Dorsolateral prefrontal cortex (tissue), 120 donors: ENCODE measurements at regions of chr7 and their contacts with region 1.

Region 1: DNA sequence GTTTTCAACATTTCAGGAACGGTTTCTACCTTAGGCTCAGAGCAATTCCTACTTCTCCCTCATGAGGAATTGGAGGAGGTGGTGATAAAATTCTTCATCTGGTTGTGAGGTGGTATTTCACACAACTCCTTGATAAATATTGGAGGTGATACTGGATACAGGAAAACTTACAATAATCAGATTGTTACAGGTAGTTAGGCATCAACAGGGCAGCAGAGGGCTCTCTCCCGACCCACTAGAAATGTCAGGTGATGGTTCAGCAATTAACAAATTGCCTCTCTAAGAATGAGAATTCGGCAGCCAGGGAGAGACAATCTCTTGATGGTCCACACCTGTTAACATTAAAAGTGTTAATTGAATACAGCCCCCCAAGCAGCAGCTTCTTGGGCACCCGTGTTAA is 22.6 kb downstream of the ZNF786 start:
- DNase-seq: no peak
- H3K4me3 ChIP-seq: no peak overlapping the region
- H3K27ac ChIP-seq: no peak overlapping the region
- H3K27me3 ChIP-seq: no peaks in the 10 kb centered on the region
- CTCF ChIP-seq: peak in 1 of 56 donors; percentile 6

Region 2: GRCh38 chr7:148575640-148576411 is 492.1 kb before region 1 on chr7:
- intact Hi-C with region 1: loop called in 1 of 2 experiments (anchors 10 kb)
- DNase-seq: peak; percentile 34 to 78 (median 70)
- H3K4me3 ChIP-seq: no peak overlapping the region
- H3K27ac ChIP-seq: no peak overlapping the region
- H3K27me3 ChIP-seq: no peaks in the 10 kb centered on the region
- CTCF ChIP-seq: peak; percentile 53 to 92 (median 81)

Region 3: GRCh38 chr7:148987010-148987750 is 80.7 kb before region 1 on chr7:
- intact Hi-C with region 1: loop called in 1 of 2 experiments (anchors 5 kb)
- DNase-seq: peak; percentile 50 to 92 (median 82)
- H3K4me3 ChIP-seq: peak overlapping the region; percentile 41 to 95 (median 76)
- H3K27ac ChIP-seq: peak overlapping the region; percentile 26 to 95 (median 87)
- H3K27me3 ChIP-seq: no peaks in the 10 kb centered on the region
- CTCF ChIP-seq: peak in 6 of 56 donors; percentile 5 to 17 (median 9)

Region 4: GRCh38 chr7:149005241-149006050 is 62.4 kb before region 1 on chr7:
- intact Hi-C with region 1: loop called (anchors 1 to 10 kb)
- DNase-seq: peak; percentile 55 to 82 (median 76)
- H3K4me3 ChIP-seq: peak overlapping the region in 2 of 59 donors; percentile 4 to 32
- H3K27ac ChIP-seq: peak overlapping the region in 4 of 59 donors; percentile 6 to 60 (median 25)
- H3K27me3 ChIP-seq: no peaks in the 10 kb centered on the region
- CTCF ChIP-seq: peak; percentile 45 to 93 (median 82)

Region 5: DNA sequence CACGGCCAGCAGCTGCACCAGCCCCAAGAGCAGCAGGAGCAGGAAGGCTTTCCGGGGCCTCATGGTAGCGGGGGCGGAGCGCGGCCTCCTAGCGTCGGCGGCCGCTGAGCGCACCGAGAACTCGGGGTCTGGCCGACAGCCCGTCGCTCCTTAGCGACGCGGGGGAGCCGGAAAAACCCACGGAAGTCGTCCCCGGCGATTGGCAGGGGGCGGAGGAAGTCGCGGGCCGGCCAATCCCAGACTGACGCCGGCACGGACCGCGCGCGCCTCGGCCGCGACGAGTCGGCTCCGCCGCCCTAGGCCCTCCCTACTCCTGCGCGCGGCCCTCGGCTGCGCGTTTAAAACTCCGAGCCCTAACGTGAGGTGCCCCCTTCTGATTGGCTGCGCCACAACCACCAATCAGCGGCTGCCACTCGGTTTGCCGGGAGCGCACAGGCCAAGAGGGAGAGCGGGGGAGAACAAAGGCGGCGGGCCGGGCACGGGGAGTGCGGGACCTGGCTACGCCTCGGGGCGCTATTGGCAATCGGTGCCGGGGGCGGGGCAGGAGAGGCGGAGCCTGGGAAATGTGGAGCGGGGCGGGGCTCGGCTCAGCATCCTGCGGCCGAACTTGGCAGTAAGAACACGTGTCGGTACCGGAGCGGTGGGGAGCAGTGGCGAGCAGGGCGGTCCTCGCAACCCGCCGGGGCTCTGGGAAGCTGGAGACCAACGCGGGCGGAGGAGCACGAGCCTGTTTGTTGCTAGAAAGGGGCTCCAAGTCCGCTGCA is 39.3 kb before region 1 on chr7 and contains the start of gene PDIA4:
- intact Hi-C with region 1: loop called (anchors 1 to 5 kb)
- DNase-seq: peak; percentile 99 to 100 (median 100)
- H3K4me3 ChIP-seq: peak within 1 kb of the TSS; percentile 68 to 99 (median 87)
- H3K27ac ChIP-seq: peak within 1 kb of the TSS in 58 of 59 donors; percentile 52 to 95 (median 87)
- H3K27me3 ChIP-seq: no peaks in the 10 kb centered on the region
- CTCF ChIP-seq: peak in 49 of 56 donors; percentile 2 to 63 (median 35)
- total RNA-seq, gene PDIA4: 17.6 to 81.7 (median 29.7) TPM

Region 6: DNA sequence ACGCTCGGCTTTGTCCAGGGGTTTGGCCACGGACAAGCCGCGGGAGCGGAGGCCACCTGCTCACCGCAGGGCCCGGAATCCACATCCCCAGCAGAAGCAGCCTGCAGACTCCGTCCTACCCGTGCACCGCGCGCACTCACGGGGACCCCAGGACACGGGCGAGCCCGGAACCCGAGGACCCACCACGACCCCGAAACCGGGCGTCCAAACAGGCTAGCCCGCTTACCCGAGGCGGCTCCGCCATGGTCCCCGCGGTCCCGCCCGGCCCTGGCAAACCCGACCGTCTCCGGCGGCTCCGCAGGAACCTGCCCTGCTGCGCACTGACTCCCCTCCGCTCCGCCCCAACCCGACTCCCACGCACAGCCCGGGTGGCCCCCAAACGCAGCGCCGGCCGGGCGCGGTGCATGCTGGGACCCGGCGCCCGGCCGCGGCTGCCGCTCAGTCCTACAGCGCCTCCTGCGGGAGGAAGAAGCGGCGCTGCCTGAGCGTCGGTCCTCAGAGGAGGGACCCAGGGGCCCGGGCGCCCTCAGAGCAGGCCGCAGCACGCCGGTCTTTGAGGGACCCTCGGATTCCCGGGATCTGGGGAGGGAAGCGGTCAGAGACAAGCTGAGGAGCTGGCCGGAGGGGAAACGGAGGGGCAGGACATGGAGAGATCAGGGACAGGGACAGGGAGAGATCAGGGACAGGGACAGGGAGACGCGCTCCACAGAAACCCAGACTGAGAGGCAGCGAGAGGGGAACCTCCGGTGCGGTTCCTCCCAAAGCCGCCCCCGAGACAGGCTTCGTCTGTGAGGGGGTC is 22.7 kb after region 1 on chr7 and contains the start of gene ZNF786:
- intact Hi-C with region 1: loop called in 1 of 2 experiments (anchors 2 kb)
- DNase-seq: peak; percentile 58 to 91 (median 78)
- H3K4me3 ChIP-seq: peak within 1 kb of the TSS; percentile 43 to 100 (median 95)
- H3K27ac ChIP-seq: peak within 1 kb of the TSS; percentile 79 to 100 (median 97)
- H3K27me3 ChIP-seq: no peaks in the 10 kb centered on the region
- CTCF ChIP-seq: peak; percentile 71 to 99 (median 92)
- total RNA-seq, gene ZNF786: 7.0 to 22.7 (median 15.0) TPM